Activated CD4-positive, alpha-beta T cell treated with anti-CD3 and anti-CD28 coated beads for 36 hours (primary cell): ENCODE measurements at regions of chr7 and their contacts with region 1.

Region 1: DNA sequence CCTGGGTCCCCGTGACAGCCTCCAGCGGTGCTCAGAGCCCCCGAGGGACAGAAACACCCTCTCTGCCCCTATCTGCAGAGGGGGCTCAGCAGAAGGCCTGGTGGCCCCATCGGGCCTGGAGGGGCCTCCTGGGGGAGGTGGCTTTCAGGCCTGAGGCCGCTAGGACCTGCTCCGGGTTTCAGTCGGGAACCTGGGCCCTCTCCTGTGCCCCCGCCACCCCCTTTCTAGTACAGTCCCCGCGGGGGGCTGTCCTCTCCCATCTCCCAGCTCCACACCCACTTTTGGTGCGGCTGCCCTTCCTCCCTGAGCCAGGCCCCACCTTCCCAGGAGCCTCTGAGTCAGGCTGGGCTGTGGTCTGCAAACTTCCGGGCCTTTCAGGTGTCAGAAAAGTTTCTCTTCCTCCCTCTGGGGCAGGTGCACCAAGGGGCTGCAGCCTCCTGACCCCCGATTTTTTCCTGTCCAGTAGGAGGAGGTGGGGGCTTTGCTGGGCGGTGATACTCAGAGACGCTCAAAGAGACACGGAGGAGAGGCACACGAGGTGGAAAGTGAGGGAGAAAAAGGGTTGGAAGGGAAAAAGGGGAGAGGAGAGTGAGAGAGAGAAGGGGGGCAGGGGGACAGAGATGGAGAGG is 692 bp downstream of the CARD11 start:
- DNase-seq: peak; percentile 86
- ATAC-seq: peak; percentile 80
- H3K4me3 Mint-ChIP-seq: peak overlapping the region; percentile 97
- H3K27ac Mint-ChIP-seq: peak overlapping the region; percentile 97
- H3K4me1 Mint-ChIP-seq: peaks cover 55% of the 10 kb centered on the region
- H3K27me3 Mint-ChIP-seq: no peaks in the 10 kb centered on the region

Region 2: GRCh38 chr7:2444476-2444875 is 598.5 kb before region 1 on chr7:
- CTCF ChIA-PET with region 1: no interaction called
- POLR2A ChIA-PET with region 1: no interaction called
- intact Hi-C with region 1: no loop called
- DNase-seq: no peak
- ATAC-seq: no peak
- H3K4me3 Mint-ChIP-seq: no peak overlapping the region
- H3K27ac Mint-ChIP-seq: no peak overlapping the region
- H3K4me1 Mint-ChIP-seq: no peaks in the 10 kb centered on the region
- H3K27me3 Mint-ChIP-seq: no peaks in the 10 kb centered on the region

Region 3: GRCh38 chr7:3028071-3028757 is 14.8 kb before region 1 on chr7:
- CTCF ChIA-PET with region 1: interaction called, 8 read pairs
- POLR2A ChIA-PET with region 1: interaction called, 10 read pairs
- intact Hi-C with region 1: loop called in 1 of 2 experiments (anchors 2 kb)
- DNase-seq: peak; percentile 84
- ATAC-seq: peak; percentile 95
- H3K4me3 Mint-ChIP-seq: peak overlapping the region; percentile 47
- H3K27ac Mint-ChIP-seq: peak overlapping the region; percentile 84
- H3K4me1 Mint-ChIP-seq: peaks cover 51% of the 10 kb centered on the region
- H3K27me3 Mint-ChIP-seq: no peaks in the 10 kb centered on the region

Region 4: GRCh38 chr7:3092468-3092867 is 49.5 kb after region 1 on chr7:
- CTCF ChIA-PET with region 1: interaction called, 3 read pairs
- POLR2A ChIA-PET with region 1: no interaction called
- intact Hi-C with region 1: loop called (anchors 1 to 5 kb)
- DNase-seq: peak; percentile 88
- ATAC-seq: peak; percentile 86
- H3K4me3 Mint-ChIP-seq: peak overlapping the region; percentile 32
- H3K27ac Mint-ChIP-seq: peak overlapping the region; percentile 89
- H3K4me1 Mint-ChIP-seq: peaks cover 67% of the 10 kb centered on the region
- H3K27me3 Mint-ChIP-seq: no peaks in the 10 kb centered on the region

Region 5: GRCh38 chr7:3267966-3268690 is 225.2 kb after region 1 on chr7:
- CTCF ChIA-PET with region 1: no interaction called
- POLR2A ChIA-PET with region 1: no interaction called
- intact Hi-C with region 1: no loop called
- DNase-seq: no peak
- ATAC-seq: no peak
- H3K4me3 Mint-ChIP-seq: no peak overlapping the region
- H3K27ac Mint-ChIP-seq: no peak overlapping the region
- H3K4me1 Mint-ChIP-seq: no peaks in the 10 kb centered on the region
- H3K27me3 Mint-ChIP-seq: peaks cover 19% of the 10 kb centered on the region

Region 6: DNA sequence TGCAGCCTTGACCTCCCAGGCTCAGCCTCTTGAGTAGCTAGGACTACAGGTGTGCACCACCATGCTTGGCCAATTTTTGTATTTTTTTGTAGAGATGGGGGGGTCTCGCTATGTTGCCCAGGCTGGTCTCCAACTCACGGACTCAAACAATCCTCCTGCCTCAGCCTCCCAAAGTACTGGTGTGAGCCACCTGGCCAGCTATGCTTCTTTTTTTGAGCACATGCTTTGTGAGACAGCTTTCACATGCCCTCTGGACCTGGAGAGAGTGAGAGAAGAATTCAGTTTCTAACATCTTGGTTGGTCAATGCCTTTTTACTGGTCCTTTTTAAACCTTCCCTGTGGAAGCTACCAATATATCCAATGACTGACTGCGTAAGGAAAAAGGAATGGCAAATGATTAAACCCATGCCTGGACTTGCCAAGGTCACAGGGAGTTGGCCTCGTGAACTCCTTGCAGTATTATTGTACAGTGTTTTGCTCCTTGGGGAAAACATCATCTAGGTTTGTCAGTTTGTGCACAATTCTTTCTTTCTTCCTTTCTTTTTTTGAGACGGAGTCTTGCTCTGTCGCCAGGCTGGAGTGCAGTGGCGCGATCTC is 1632.9 kb after region 1 on chr7:
- CTCF ChIA-PET with region 1: no interaction called
- POLR2A ChIA-PET with region 1: no interaction called
- intact Hi-C with region 1: no loop called
- DNase-seq: no peak
- ATAC-seq: no peak
- H3K4me3 Mint-ChIP-seq: no peak overlapping the region
- H3K27ac Mint-ChIP-seq: no peak overlapping the region
- H3K4me1 Mint-ChIP-seq: no peaks in the 10 kb centered on the region
- H3K27me3 Mint-ChIP-seq: no peaks in the 10 kb centered on the region